Naive thymus-derived CD4-positive, alpha-beta T cell (primary cell): ENCODE measurements at regions of chr19 and their contacts with region 1.

Region 1: GRCh38 chr19:16470911-16471811 is 609 bp downstream of the EPS15L1 start:
- DNase-seq: peak in 5 of 9 donors; percentile 14 to 40 (median 18)
- ATAC-seq: peak; percentile 2
- H3K4me3 ChIP-seq: peak overlapping the region; percentile 96
- H3K4me3 Mint-ChIP-seq: peak overlapping the region; percentile 84 to 93 (median 88)
- H3K27ac ChIP-seq: peak overlapping the region; percentile 96
- H3K27ac Mint-ChIP-seq: peak overlapping the region; percentile 18 to 87 (median 79)
- H3K4me1 ChIP-seq: peaks cover 5 to 15% of the 10 kb centered on the region in 2 donors
- H3K4me1 Mint-ChIP-seq: peaks cover 30 to 47% (median 41%) of the 10 kb centered on the region in 7 donors
- H3K27me3 ChIP-seq: no peaks in the 10 kb centered on the region
- H3K27me3 Mint-ChIP-seq: peaks cover 0 to 2% (median 0%) of the 10 kb centered on the region in 5 donors

Region 2: DNA sequence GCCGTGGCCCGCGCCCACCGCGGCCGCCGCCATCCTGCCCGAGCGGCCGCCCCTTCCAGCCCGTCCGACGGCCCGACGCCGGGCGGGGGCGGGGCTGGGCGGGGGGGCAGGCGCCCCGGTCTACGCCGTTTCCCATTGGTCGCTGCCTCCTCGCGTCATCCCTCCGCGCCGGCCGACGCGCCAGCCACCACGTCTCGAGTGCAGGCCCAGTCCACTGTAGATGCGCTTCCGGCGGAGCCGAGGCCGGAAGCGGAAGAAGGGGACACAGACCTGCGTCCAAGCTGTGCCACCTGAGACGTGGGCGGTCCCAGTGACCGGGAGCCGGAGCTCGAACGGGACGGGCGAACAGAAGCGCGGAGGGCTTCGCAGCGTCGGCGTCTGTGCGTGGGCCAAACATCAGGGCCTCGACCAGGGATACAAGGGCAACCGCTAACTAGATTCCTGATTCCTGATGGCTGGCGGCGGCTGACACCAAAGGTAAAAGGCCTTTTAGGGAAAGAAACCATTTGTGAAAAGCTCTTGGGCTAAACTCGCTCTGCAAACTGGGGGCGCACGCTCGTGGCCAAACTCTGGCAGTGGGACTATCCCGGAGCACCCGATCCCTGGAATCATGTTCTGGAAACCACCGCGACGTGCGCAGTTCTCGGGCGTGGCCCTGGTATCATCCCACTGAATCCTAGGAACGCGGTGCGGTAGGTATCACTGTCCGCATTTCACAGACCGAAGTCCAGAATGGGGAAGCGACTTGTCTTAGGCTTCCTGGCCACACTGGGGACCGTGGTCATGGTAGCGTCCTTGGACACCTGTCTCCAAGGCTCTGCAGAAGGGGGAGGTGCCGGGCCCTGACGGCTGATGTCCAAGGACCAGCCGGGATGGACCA is 101.4 kb after region 1 on chr19 and contains the start of gene SLC35E1:
- CTCF ChIA-PET with region 1: no interaction called
- POLR2A ChIA-PET with region 1: no interaction called
- intact Hi-C with region 1: loop called in 1 of 2 experiments (anchors 2 kb)
- DNase-seq: peak; percentile 80 to 92 (median 89)
- ATAC-seq: peak; percentile 98
- H3K4me3 ChIP-seq: peak within 1 kb of the TSS; percentile 97
- H3K4me3 Mint-ChIP-seq: peak within 1 kb of the TSS; percentile 97 to 100 (median 99)
- H3K27ac ChIP-seq: peak within 1 kb of the TSS; percentile 95
- H3K27ac Mint-ChIP-seq: peak within 1 kb of the TSS; percentile 94 to 100 (median 99)
- H3K4me1 ChIP-seq: peaks cover 28 to 30% of the 10 kb centered on the region in 2 donors
- H3K4me1 Mint-ChIP-seq: peaks cover 35 to 74% (median 47%) of the 10 kb centered on the region in 7 donors
- H3K27me3 ChIP-seq: no peaks in the 10 kb centered on the region
- H3K27me3 Mint-ChIP-seq: peaks cover 0 to 2% (median 0%) of the 10 kb centered on the region in 5 donors
- total RNA-seq, gene SLC35E1: 33.0 to 67.3 (median 58.7) TPM